BJ (cell line): ENCODE measurements at regions of chr20 and their contacts with region 1.

Region 1: GRCh38 chr20:34312544-34313217 is 9.5 kb upstream of the AHCY start:
- DNase-seq: no peak
- H3K4me3 ChIP-seq: peak overlapping the region; percentile 3; the same call in 1 of the 2 replicates
- H3K27me3 ChIP-seq: no peaks in the 10 kb centered on the region
- CTCF ChIP-seq: peak; percentile 100

Region 2: GRCh38 chr20:34190679-34191090 is 122.0 kb before region 1 on chr20:
- CTCF ChIA-PET with region 1: interaction called, 60 read pairs
- POLR2A ChIA-PET with region 1: no interaction called
- DNase-seq: peak; percentile 47
- H3K4me3 ChIP-seq: no peak overlapping the region
- H3K27me3 ChIP-seq: peaks cover 3% of the 10 kb centered on the region; the same call in 1 of the 2 replicates
- CTCF ChIP-seq: peak; percentile 89

Region 3: DNA sequence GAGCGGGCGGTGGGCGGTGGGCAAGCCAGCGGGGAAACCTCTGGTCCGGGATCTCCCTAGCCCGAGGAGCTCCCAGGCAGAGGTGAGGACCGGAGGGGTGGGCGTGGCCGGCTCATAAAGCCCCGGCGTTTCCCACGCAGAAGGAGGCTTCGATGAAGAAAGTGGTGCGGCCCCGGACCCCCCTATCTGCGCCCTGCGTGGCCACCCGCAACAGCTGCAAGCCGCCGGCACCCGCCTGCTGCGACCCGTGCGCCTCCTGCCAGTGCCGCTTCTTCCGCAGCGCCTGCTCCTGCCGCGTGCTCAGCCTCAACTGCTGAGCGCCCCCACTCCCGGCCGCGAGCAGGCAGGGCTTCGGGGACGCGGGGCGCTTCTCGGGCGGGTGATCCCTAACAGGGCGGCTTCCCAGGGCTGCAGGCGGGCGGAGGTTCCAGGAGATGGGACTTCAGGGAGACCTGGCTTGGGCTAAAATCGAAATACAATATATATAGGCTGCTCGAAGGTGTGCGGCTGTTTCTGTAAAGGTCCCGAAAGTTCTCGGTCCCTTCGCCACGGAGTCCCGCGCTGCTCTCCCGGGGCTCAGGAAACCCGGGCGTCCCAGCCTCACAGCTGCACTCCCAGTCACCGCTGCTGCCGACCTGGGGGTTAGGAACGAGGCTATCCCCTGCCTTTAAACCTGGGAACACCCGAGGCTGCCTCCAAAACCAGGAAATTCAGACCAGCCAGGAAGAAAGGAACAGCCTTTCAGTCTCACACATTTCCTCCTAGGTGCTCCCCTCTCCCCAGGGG is 43.6 kb before region 1 on chr20:
- CTCF ChIA-PET with region 1: no interaction called
- POLR2A ChIA-PET with region 1: no interaction called
- DNase-seq: no peak
- H3K4me3 ChIP-seq: peak overlapping the region; percentile 27
- H3K27me3 ChIP-seq: no peaks in the 10 kb centered on the region
- CTCF ChIP-seq: 0 out of 2 replicates have a peak, but pooled peaks have one; percentile 8

Region 4: DNA sequence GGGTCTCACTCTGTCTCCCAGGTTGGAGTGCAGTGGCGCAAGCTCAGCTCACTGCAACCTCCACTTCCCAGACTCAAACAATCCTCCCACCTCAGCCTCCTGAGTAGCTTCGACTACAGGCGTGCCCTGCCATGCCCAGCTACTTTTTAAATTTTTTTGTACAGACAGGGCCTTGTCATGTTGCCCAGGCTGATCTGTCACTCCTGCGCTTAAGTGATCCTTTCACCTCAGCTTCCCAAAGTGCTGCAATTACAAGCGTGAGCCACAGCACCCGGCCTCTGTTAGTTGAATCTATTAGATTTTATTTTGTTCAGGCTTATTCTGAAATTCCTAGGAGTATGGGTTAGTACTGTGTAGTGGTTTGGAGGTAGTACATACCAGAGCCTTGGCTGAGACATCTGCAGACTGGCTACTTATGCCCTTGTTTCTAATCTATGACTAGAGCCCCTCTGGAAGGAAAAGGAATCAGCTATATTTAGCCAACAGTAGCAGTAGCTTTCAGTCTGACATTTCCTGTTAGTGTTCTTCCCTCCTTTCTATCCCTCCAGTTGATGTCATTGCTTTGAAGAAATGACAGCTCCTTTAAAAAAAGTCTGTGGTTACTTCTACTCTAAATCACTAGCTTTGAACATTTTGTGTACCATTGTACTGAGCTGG is 124.8 kb after region 1 on chr20:
- CTCF ChIA-PET with region 1: interaction called, 12 read pairs
- POLR2A ChIA-PET with region 1: no interaction called
- DNase-seq: no peak
- H3K4me3 ChIP-seq: no peak overlapping the region
- H3K27me3 ChIP-seq: no peaks in the 10 kb centered on the region
- CTCF ChIP-seq: no peak

Region 5: DNA sequence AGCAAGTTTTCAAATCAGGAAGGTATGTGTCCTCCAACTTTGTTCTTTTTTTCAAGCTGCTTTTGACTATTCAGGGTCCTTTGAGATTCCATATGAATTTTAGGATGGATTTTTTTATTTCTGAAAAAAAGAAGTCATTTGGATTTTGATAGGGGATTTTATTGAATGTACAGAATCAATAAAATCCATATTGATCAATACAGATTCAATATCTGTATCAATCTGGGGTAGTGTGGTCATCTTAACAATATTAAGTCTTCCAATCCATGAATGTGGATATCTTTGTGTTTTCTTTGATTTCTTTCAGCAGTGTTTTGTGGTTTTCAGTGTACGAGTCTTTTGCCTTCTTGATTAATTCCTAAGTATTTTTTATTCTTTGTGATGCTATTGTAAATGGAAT is 152.6 kb after region 1 on chr20:
- CTCF ChIA-PET with region 1: interaction called, 11 read pairs
- POLR2A ChIA-PET with region 1: interaction called, 4 read pairs
- DNase-seq: no peak
- H3K4me3 ChIP-seq: no peak overlapping the region
- H3K27me3 ChIP-seq: no peaks in the 10 kb centered on the region
- CTCF ChIP-seq: no peak

Region 6: GRCh38 chr20:34506480-34506879 is 193.8 kb after region 1 on chr20:
- CTCF ChIA-PET with region 1: interaction called, 10 read pairs
- POLR2A ChIA-PET with region 1: no interaction called
- DNase-seq: no peak
- H3K4me3 ChIP-seq: no peak overlapping the region
- H3K27me3 ChIP-seq: no peaks in the 10 kb centered on the region
- CTCF ChIP-seq: no peak

Region 7: GRCh38 chr20:34538671-34539123 is 226.0 kb after region 1 on chr20:
- CTCF ChIA-PET with region 1: interaction called, 19 read pairs
- POLR2A ChIA-PET with region 1: no interaction called
- DNase-seq: no peak
- H3K4me3 ChIP-seq: no peak overlapping the region
- H3K27me3 ChIP-seq: no peaks in the 10 kb centered on the region
- CTCF ChIP-seq: peak; percentile 89

Region 8: DNA sequence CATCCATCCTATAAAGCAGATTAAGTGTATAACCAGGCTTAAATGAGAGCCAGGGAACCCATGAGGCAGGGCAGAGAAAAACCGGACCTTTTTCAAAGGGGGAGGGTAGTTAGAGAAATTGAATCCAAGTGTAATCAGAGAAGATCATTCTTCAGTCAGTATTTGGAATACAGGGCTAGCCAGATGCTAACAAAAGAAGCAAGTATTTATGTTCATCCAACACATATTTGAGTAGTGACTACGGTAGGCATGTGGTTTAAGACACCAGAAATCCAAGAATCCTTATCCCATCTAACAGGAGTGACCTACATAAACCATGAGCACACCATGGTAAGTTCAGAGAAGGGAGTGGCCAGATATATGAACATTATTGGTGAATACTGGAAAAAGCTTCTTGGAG is 1026.3 kb after region 1 on chr20:
- CTCF ChIA-PET with region 1: no interaction called
- POLR2A ChIA-PET with region 1: no interaction called
- DNase-seq: peak; percentile 87
- H3K4me3 ChIP-seq: no peak overlapping the region
- H3K27me3 ChIP-seq: no peaks in the 10 kb centered on the region
- CTCF ChIP-seq: no peak